H1 (cell line): ENCODE measurements at regions of chr1 and their contacts with region 1.

Region 1: DNA sequence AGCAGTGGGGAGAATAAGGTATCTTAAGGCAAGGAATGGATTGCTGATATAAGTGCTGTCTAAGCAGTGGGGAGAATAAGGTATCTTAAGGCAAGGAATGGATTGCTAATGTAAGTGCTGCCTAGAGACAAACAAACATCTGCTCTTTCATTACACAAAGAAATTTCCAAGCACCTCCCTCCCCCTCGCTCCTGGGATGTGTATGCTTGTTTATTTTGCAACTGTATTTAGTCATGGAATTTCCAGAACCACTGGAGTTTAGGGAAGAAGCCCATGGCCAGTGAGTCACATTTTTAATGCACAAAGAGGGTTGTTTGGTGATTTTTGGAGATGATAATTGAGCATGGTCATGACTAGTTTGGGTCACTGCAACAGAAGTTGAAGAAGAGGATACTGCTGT is 21.5 kb downstream of the PDPN start:
- DNase-seq: no peak
- H3K4me3 ChIP-seq: no peak overlapping the region
- H3K27ac ChIP-seq: no peak overlapping the region
- H3K4me1 ChIP-seq: peaks cover 3 to 16% (median 8%) of the 10 kb centered on the region in 4 experiments
- H3K27me3 ChIP-seq: no peaks in the 10 kb centered on the region
- CTCF ChIP-seq: no peak
- EP300 ChIP-seq: no peak
- POLR2A ChIP-seq: no peak
- RAD21 ChIP-seq: no peak

Region 2: GRCh38 chr1:13583966-13584791 is 21.0 kb before region 1 on chr1:
- CTCF ChIA-PET with region 1: interaction called, 4 read pairs
- POLR2A ChIA-PET with region 1: interaction called, 31 read pairs
- DNase-seq: peak in 1 of 2 experiments; percentile 56
- H3K4me3 ChIP-seq: peak overlapping the region; percentile 80 to 100 (median 88)
- H3K27ac ChIP-seq: peak overlapping the region; percentile 52
- H3K4me1 ChIP-seq: peaks cover 9 to 41% (median 29%) of the 10 kb centered on the region in 4 experiments
- H3K27me3 ChIP-seq: peaks cover 0 to 3% (median 0%) of the 10 kb centered on the region in 4 experiments; a peak in 3 of 7 replicates
- CTCF ChIP-seq: no peak
- EP300 ChIP-seq: no peak
- POLR2A ChIP-seq: no peak
- RAD21 ChIP-seq: no peak

Region 3: GRCh38 chr1:13593511-13594131 is 11.5 kb before region 1 on chr1:
- CTCF ChIA-PET with region 1: no interaction called
- POLR2A ChIA-PET with region 1: interaction called, 11 read pairs
- DNase-seq: no peak
- H3K4me3 ChIP-seq: no peak overlapping the region; a peak in 1 of 8 replicates
- H3K27ac ChIP-seq: no peak overlapping the region
- H3K4me1 ChIP-seq: peaks cover 3 to 15% (median 7%) of the 10 kb centered on the region in 4 experiments
- H3K27me3 ChIP-seq: no peaks in the 10 kb centered on the region; a peak in 1 of 7 replicates
- CTCF ChIP-seq: no peak
- EP300 ChIP-seq: no peak
- POLR2A ChIP-seq: no peak
- RAD21 ChIP-seq: no peak

Region 4: DNA sequence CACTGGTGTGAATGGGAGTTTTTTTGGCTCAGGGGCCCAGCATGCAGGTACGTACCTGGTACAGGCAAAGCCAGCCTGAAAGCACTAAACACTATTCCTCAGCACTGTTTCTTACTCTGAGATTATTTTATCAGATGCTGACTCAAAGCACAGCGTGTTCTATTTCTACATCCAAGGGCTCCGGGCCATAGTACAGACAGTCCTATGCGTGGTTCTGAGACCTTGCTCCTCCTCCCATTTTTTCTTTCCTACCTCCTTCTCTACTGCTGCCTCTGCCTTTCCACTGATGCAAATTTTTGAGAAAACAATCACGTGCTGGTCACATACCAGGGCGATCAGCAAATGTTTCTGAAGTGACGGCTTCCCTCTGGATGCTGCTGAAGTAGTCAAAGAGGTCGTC is 14.8 kb after region 1 on chr1:
- CTCF ChIA-PET with region 1: no interaction called
- POLR2A ChIA-PET with region 1: no interaction called
- DNase-seq: no peak
- H3K4me3 ChIP-seq: no peak overlapping the region
- H3K27ac ChIP-seq: no peak overlapping the region
- H3K4me1 ChIP-seq: no peaks in the 10 kb centered on the region; a peak in 1 of 7 replicates
- H3K27me3 ChIP-seq: no peaks in the 10 kb centered on the region
- CTCF ChIP-seq: no peak
- EP300 ChIP-seq: no peak
- POLR2A ChIP-seq: no peak
- RAD21 ChIP-seq: no peak